Panc1 (cell line): ENCODE measurements at regions of chr10 and their contacts with region 1.

Region 1: DNA sequence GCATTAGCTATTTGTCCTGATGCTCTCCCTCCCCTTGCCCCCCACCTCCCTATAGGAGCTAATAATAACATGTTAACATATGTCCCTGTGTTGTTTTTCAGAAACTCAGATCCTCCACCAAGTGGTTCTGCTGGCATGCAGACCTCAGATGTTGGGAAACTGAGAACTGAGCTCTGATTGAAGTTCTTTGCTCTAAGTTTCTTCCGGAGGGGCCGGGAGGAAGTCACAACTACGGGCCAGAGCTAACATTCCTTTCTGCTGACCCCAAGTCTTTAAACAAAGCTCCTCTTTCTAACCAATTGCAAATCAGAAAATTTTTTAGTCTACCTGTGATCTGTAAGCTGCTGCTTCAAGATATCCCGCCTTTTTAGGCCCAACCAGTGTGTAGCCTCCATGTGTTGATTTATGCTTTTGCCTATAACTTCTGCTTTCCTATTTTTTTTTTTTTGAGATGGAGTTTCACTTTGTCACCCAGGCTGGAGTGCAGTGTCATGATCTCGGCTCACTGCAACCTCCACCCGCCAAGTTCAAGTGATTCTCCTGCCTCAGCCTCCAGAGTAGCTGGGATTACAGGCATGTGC is 66.6 kb downstream of the LYZL1 start:
- DNase-seq: no peak
- ATAC-seq: no peak
- H3K4me3 ChIP-seq: no peak overlapping the region
- H3K27ac ChIP-seq: no peak overlapping the region
- H3K4me1 ChIP-seq: no peaks in the 10 kb centered on the region
- H3K27me3 ChIP-seq: no peaks in the 10 kb centered on the region
- CTCF ChIP-seq: no peak

Region 2: DNA sequence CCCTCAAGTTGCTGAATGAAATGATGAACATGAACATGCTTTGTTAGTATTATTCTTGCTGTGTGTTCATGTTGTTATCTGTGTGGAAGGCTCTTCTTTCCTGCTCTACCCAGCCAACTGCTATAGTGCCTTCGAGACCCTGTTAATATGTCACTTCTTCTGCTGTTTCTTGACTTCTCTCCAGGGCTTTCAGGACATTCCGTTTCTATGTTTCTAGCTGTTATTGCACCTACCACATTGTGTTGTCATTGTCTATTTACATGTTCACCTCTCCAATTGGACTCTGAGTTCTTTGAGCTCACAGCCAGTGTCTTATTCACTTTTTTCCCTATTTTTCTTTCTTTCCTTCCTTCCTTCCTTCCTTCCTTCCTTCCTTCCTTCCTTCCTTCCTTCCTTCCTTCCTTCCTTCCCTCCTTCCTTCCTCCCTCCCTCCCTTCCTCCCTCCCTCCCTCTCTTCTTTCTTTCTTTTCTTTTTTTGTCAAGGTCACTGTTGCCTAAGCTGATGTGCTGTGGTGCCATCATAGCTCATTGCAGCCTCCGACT is 637.8 kb before region 1 on chr10:
- CTCF ChIA-PET with region 1: no interaction called
- POLR2A ChIA-PET with region 1: interaction called, 11 read pairs
- in situ Hi-C with region 1: no loop called
- intact Hi-C with region 1: no loop called
- DNase-seq: no peak
- ATAC-seq: no peak
- H3K4me3 ChIP-seq: no peak overlapping the region
- H3K27ac ChIP-seq: no peak overlapping the region
- H3K4me1 ChIP-seq: no peaks in the 10 kb centered on the region
- H3K27me3 ChIP-seq: no peaks in the 10 kb centered on the region
- CTCF ChIP-seq: no peak

Region 3: DNA sequence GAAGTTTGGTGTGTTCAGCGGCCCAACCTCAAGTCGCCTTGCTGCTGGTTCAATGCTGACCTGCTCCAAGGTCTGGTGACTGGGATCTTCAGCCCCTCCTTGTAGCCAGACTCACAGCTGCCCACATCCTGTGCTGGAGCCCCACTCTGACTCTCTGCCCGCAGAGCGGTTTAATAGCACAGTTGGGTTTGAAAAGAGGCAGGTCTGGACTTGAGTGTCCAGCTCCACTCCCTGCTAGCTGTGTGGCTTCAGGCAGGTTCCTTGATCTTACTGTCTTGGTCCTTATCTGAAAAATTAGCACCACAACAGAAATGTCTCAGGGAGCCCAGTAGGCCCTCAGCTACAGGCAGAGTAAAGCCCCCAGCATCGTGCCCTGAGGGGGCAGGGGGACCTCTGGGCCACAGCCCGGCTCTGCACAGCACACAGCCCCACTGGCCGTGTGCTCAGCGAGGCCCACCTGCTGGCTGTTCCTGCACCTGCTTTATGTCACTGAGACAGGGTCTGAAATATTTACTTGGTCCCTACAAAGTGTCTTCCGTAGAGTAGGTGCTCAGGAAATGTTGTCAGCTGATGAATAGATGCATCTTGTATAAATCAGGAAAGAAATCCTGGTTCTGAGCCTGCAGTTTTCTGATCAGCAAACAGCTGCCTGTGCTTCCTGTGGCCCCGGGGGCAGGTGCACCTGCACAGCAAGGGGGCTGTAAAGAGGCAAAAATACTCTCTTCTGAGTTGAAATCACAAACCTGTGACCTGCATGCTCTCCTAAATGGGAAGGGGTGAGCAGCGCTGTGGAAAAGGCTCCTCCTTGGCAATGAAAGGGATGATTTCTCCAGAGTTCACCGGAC is 123.8 kb after region 1 on chr10:
- CTCF ChIA-PET with region 1: no interaction called
- POLR2A ChIA-PET with region 1: no interaction called
- in situ Hi-C with region 1: no loop called
- intact Hi-C with region 1: no loop called
- DNase-seq: no peak
- ATAC-seq: peak; percentile 30; the same call in 1 of the 2 replicates
- H3K4me3 ChIP-seq: no peak overlapping the region
- H3K27ac ChIP-seq: no peak overlapping the region
- H3K4me1 ChIP-seq: no peaks in the 10 kb centered on the region
- H3K27me3 ChIP-seq: no peaks in the 10 kb centered on the region
- CTCF ChIP-seq: no peak